SK-N-SH (cell line): ENCODE measurements at regions of chr18 and their contacts with region 1.

Region 1: DNA sequence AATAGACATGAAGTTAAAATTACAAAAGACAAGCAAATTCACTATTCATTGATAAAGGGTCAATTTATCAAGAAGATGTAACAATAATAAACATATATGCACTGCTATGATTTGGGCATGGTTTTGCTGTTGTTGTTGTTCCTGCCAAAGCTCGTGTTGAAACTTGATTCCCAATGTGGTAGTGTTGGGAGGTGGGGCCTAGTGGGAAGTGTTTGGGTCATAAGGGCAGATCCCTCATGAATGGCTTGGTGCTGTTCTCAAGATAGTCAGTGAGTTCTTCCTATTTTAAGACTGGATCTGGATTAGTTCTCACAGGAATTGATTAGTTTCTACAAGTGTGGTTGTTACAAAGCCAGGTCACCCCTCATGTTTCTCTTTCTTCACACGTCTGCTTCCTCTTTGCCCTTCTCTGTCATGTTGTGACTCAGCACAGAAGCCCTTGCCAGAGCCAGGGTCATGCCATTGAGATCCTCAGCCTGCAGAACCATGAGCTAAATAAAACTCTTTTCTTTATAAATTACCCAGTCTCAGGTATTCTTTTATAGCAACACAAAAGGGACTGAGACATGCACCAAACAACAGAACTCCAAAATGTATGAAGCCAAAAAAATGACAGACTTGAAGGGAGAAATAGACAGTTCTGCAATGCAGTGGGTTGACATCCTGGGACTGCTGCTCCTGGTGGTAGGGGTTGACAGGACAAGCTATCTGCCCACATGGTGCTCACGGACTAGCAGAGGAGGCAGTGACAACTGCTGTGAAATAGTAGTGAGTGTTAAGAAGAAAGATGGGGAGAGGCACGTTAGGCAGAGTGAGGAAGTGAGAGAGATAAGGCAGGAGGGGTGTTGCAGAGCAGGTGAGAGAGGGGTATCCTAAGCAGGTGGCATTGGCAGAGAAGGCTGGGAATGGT is 18.6 kb upstream of the SKA1 start:
- DNase-seq: no peak
- H3K4me3 ChIP-seq: no peak overlapping the region
- H3K27ac ChIP-seq: no peak overlapping the region
- H3K4me1 ChIP-seq: peaks cover 0 to 4% of the 10 kb centered on the region in 2 experiments; a peak in 2 of 4 replicates
- H3K27me3 ChIP-seq: peaks cover 6% of the 10 kb centered on the region; the same call in 1 of the 2 replicates
- CTCF ChIP-seq: no peak
- EP300 ChIP-seq: no peak
- RAD21 ChIP-seq: no peak

Region 2: GRCh38 chr18:49189772-49190171 is 1166.5 kb before region 1 on chr18:
- CTCF ChIA-PET with region 1: no interaction called
- POLR2A ChIA-PET with region 1: no interaction called
- DNase-seq: no peak
- H3K4me3 ChIP-seq: no peak overlapping the region
- H3K27ac ChIP-seq: peak overlapping the region in 1 of 2 experiments; percentile 53; a peak in 2 of 4 replicates
- H3K4me1 ChIP-seq: peaks cover 3 to 6% of the 10 kb centered on the region in 2 experiments; a peak in 3 of 4 replicates
- H3K27me3 ChIP-seq: no peaks in the 10 kb centered on the region
- CTCF ChIP-seq: no peak
- EP300 ChIP-seq: no peak
- RAD21 ChIP-seq: no peak

Region 3: DNA sequence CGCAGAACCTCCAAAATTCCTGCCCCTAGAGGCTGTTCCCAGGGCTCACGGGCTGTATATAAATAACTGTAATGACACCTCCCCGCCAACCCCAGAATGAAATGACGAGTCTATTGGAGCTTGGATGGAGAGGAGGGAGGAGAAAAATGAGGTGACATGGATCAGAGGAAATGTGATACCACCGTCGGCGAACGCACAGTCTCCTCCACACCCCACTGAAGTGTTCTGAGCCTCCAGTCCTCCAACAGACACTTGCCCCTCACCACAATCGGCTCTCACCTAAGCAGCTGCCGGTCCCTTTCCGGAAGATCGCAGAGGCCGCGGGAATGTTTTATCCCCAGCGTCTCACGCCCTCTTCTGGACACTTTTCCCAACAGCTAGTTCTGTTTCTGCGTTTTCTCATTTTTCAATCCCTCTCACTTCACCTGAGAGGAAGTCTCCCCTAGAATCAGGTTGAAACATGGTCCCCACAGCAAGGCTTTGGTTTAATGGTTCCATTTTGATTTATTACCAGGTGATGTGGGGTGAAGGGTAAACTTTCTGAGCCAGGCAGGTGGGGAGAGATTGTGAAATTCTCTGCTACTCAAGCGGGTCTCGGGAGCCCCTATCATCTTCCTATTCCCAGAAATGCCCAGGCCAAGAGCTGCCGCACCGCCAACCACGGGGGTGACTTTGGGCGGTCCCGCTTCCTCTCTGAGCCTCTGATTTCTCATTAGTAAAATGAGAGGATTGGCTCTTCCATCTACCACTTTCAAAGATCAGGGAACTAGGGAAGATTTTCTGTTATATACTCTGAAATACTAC is 152.3 kb before region 1 on chr18:
- CTCF ChIA-PET with region 1: interaction called, 27 read pairs
- POLR2A ChIA-PET with region 1: no interaction called
- DNase-seq: peak; percentile 68
- H3K4me3 ChIP-seq: no peak overlapping the region; a peak in 1 of 4 replicates
- H3K27ac ChIP-seq: no peak overlapping the region
- H3K4me1 ChIP-seq: peaks cover 0 to 2% of the 10 kb centered on the region in 2 experiments; a peak in 1 of 4 replicates
- H3K27me3 ChIP-seq: no peaks in the 10 kb centered on the region; the same call in 1 of the 2 replicates
- CTCF ChIP-seq: peak; percentile 66
- EP300 ChIP-seq: no peak
- RAD21 ChIP-seq: peak; percentile 79

Region 4: GRCh38 chr18:50281295-50281971 is 74.9 kb before region 1 on chr18 and contains the start of gene MBD1:
- CTCF ChIA-PET with region 1: interaction called, 23 read pairs
- POLR2A ChIA-PET with region 1: no interaction called
- DNase-seq: peak; percentile 99
- H3K4me3 ChIP-seq: peak within 1 kb of the TSS; percentile 86 to 99
- H3K27ac ChIP-seq: peak within 1 kb of the TSS; percentile 75 to 95
- H3K4me1 ChIP-seq: peaks cover 14 to 29% of the 10 kb centered on the region in 2 experiments; a peak in 3 of 4 replicates
- H3K27me3 ChIP-seq: no peaks in the 10 kb centered on the region
- CTCF ChIP-seq: no peak
- EP300 ChIP-seq: no peak
- RAD21 ChIP-seq: no peak
- polyA plus RNA-seq, gene MBD1: 70.6 and 72.3 TPM in 2 replicates

Region 5: DNA sequence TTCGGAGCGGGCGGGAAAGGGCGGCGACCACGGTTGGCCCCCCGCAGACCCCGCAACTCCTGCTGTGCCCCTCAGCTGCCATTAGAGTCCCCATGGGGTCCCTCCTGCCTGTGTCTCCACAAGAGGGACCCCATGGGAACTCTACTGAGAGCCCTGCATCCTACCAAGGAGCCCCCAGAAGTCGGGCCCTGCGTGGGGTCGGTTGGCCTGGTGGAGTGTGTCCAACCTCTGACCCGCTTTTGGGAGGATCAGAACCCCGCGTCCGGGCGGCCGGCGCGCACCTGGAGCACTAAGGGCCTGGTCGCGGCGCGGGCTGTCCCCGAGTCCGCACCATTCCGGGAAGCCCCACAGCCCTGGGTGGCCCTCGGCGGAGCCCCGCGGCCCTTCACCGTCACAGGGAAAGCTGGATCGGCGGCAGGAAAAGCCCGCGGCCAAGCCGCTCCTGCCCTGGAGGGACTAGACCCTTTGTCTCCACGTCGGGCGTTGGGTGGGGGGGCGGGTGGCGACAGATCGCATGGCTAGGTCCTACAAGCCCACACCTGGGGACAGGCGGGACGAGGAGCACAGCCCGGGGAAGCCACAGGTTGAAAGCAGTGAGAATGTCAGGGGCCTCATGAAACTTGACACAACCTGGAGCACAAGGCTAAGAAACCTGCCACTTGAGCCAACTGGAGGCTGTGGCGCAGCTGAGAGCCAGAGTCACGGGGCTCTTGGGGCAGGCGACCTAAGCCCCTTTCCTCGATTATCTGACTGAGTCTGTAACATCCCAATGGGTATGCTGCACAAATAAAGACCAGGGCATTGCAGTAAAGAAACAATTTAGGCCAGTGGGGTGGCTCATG is 57.6 kb before region 1 on chr18:
- CTCF ChIA-PET with region 1: interaction called, 14 read pairs
- POLR2A ChIA-PET with region 1: interaction called, 3 read pairs
- DNase-seq: no peak
- H3K4me3 ChIP-seq: peak overlapping the region; percentile 53 to 59
- H3K27ac ChIP-seq: no peak overlapping the region
- H3K4me1 ChIP-seq: peaks cover 0 to 3% of the 10 kb centered on the region in 2 experiments; a peak in 1 of 4 replicates
- H3K27me3 ChIP-seq: peaks cover 18% of the 10 kb centered on the region
- CTCF ChIP-seq: no peak
- EP300 ChIP-seq: no peak
- RAD21 ChIP-seq: no peak

Region 6: DNA sequence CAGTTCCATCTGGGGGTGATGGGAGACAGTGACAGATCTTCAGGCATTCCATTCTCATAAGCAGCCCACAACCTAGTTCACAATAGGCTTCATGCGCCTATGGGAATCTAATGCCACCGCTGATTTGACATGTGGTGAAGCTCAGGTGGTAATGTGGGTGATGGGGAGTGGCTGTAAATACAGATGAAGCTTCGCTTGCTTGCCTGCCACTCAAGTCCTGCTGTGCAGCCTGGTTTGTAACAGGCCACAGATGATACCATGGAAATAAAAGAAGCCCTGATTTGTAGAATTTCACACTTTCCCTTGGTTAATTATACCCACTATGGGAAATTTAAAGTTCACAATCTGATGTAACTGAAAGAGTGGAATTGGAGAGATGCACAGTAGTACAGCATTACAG is 28.3 kb before region 1 on chr18:
- CTCF ChIA-PET with region 1: interaction called, 12 read pairs
- POLR2A ChIA-PET with region 1: no interaction called
- DNase-seq: no peak
- H3K4me3 ChIP-seq: no peak overlapping the region
- H3K27ac ChIP-seq: no peak overlapping the region
- H3K4me1 ChIP-seq: no peaks in the 10 kb centered on the region
- H3K27me3 ChIP-seq: no peaks in the 10 kb centered on the region
- CTCF ChIP-seq: no peak
- EP300 ChIP-seq: no peak
- RAD21 ChIP-seq: no peak

Region 7: GRCh38 chr18:50374753-50375391 is 18.6 kb after region 1 on chr18 and contains the start of gene SKA1:
- CTCF ChIA-PET with region 1: interaction called, 16 read pairs
- POLR2A ChIA-PET with region 1: interaction called, 3 read pairs
- DNase-seq: peak; percentile 98
- H3K4me3 ChIP-seq: peak within 1 kb of the TSS; percentile 89 to 99
- H3K27ac ChIP-seq: peak within 1 kb of the TSS; percentile 34 to 78; a peak in 3 of 4 replicates
- H3K4me1 ChIP-seq: peaks cover 3 to 6% of the 10 kb centered on the region in 2 experiments; a peak in 2 of 4 replicates
- H3K27me3 ChIP-seq: no peaks in the 10 kb centered on the region
- CTCF ChIP-seq: no peak
- EP300 ChIP-seq: no peak
- RAD21 ChIP-seq: no peak
- polyA plus RNA-seq, gene SKA1: 4.3 and 4.5 TPM in 2 replicates

Region 8: DNA sequence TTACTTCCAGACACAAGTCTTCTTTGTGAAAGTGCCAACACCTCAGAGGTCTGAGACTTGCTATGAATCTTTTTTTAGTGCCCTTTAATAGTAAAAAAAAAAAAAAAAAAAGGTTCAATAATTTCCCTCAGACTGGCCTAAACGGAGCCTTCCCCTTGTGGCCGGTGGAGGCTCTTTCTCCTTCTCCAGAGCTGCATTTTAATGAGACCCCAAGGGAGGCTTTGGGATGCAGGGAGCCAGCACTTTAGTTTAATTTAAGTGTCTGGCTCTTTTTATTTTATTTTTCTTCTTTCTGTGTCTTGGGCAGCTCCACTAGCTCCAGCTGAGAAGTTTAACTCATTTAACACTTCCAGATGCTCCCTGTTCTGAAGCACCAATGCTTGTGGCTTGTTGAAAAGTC is 135.8 kb after region 1 on chr18:
- CTCF ChIA-PET with region 1: no interaction called
- POLR2A ChIA-PET with region 1: no interaction called
- DNase-seq: no peak
- H3K4me3 ChIP-seq: no peak overlapping the region
- H3K27ac ChIP-seq: no peak overlapping the region
- H3K4me1 ChIP-seq: no peaks in the 10 kb centered on the region
- H3K27me3 ChIP-seq: no peaks in the 10 kb centered on the region
- CTCF ChIP-seq: no peak
- EP300 ChIP-seq: no peak
- RAD21 ChIP-seq: no peak